AG04450 (cell line): ENCODE measurements at regions of chr7 and their contacts with region 1.

Region 1: DNA sequence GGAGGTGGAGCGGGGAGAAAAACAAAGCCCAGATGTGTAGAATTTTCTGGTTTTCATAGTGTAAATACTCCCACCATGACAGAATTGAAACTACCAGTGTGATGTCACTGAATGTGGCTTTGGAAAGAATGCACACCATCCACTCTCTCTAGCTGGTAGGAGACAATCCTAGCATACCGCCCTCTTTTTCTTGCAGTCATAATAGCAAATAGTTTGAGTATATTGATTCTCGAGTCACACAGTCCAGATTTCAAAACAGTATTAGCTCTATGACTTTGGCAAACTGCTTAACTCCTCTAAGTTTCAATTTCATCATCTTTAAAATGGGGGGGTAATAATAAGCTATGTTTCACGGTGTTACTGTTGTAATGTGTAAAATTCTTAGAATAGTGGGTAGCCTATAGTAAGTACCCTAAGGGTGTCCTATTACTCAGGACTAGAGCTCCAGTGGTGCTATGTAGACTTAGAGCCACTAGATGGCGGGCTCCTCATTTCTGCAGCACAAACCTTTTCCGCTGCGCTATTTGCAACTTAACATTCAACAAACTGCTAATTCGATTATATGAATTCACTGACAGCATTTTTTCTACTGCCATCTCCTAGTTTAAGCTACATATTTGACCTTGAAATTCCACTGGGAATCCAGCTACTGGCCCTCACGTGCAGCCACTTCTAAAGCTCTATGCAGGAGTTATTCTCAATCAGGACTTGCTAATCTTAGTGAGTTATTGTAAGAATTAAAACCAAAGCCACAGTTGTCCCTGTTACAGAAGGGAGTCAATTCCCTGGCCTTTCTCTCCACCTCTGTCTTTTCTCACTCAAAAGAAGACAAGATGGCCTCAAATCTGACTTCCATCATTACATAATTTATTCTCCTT is 18.7 kb downstream of the TAS2R40 start:
- DNase-seq: peak; percentile 68
- H3K4me3 ChIP-seq: no peak overlapping the region
- H3K27ac ChIP-seq: no peak overlapping the region
- H3K27me3 ChIP-seq: no peaks in the 10 kb centered on the region
- CTCF ChIP-seq: peak; percentile 97

Region 2: DNA sequence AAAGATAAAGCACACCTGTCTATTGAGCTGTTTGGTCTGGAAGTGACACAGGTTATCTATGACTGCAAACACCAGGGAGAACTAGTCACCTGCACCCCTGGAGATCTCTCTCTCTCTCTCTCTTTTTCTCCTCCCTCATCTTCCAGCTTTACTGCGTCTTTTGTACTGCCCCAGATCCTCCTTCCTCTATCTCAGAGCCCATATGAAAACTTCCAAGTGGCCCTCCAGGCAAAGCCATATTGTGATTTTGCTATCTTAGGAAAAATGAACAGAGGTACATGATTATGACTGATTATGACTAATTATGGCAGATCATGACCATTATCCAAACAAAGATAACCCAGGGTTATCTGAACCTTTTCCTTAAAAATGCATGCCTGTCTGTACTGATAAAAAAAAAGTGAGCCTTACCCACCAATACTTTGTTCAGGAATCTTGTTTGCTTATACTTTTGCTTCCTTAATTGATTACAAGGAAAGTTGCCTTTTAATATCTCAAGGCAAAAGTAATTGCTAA is 398.2 kb before region 1 on chr7:
- CTCF ChIA-PET with region 1: no interaction called
- POLR2A ChIA-PET with region 1: no interaction called
- DNase-seq: no peak
- H3K4me3 ChIP-seq: no peak overlapping the region
- H3K27ac ChIP-seq: no peak overlapping the region
- H3K27me3 ChIP-seq: no peaks in the 10 kb centered on the region
- CTCF ChIP-seq: no peak

Region 3: GRCh38 chr7:143214789-143215679 is 25.5 kb before region 1 on chr7:
- CTCF ChIA-PET with region 1: interaction called, 61 read pairs
- POLR2A ChIA-PET with region 1: no interaction called
- DNase-seq: peak; percentile 71
- H3K4me3 ChIP-seq: no peak overlapping the region
- H3K27ac ChIP-seq: no peak overlapping the region
- H3K27me3 ChIP-seq: no peaks in the 10 kb centered on the region
- CTCF ChIP-seq: peak; percentile 100

Region 4: DNA sequence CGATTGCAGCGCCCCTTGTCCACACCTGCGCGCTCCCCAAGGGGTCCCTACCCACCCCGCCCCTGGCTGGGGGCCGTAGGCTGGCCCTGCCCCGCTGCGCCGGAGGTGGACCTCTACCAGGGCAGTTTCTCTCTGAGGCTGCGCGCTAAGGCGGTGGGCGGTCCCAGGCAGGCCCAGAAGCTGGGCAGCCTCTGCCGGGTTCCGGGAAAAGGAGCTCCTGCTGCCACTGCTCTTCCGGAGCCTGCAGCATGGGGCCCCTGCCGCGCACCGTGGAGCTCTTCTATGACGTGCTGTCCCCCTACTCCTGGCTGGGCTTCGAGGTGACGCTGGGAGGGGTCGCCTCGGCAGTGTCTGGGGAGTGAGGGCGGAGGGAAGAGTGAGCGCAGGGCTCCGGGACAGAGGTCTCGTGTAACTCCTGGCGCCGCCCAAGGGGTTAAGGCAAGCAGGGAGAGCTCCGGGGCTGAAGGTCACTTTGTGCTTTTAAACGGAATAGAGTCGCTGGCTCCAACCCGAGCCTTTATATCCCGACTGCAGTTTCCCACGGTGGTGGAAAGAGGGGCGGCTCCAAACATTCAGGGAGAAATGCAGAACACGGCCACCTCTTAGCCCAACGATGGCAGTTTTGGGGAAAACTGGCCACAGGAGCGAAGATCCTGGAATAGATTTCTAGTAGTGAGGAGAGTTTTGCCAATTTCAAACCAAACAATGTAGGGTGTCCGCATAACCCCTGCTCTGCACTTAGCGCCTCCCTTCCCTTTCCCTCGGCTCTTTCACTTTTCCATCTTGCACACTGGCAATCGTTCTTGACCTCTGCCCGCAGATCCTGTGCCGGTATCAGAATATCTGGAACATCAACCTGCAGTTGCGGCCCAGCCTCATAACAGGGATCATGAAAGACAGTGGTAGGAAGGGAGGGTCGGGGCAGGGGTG is 23.0 kb after region 1 on chr7 and contains the start of gene GSTK1:
- CTCF ChIA-PET with region 1: interaction called, 57 read pairs
- POLR2A ChIA-PET with region 1: no interaction called
- DNase-seq: peak; percentile 16
- H3K4me3 ChIP-seq: peak within 1 kb of the TSS; percentile 86
- H3K27ac ChIP-seq: peak within 1 kb of the TSS; percentile 31
- H3K27me3 ChIP-seq: no peaks in the 10 kb centered on the region
- CTCF ChIP-seq: no peak
- polyA plus RNA-seq, gene GSTK1: 100 and 116 TPM in 2 replicates

Region 5: DNA sequence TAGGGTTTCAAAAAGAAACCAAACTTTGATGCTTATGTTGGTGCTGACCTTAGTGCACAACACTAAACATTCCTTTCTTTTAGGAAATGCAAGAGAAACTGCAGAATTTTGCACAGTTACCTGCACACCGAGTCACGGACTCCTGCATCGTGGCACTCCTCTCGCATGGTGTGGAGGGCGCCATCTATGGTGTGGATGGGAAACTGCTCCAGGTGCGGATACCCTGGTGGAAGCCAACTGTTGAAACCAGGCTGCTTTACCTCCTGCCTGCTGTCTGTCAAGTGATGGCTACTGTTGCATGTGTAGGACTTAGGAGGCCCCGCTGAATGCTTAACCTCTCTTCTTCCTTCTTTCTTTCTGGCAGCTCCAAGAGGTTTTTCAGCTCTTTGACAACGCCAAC is 59.3 kb after region 1 on chr7:
- CTCF ChIA-PET with region 1: interaction called, 24 read pairs
- POLR2A ChIA-PET with region 1: interaction called, 6 read pairs
- DNase-seq: no peak
- H3K4me3 ChIP-seq: no peak overlapping the region
- H3K27ac ChIP-seq: no peak overlapping the region
- H3K27me3 ChIP-seq: no peaks in the 10 kb centered on the region
- CTCF ChIP-seq: peak; percentile 47

Region 6: GRCh38 chr7:143372070-143372469 is 131.5 kb after region 1 on chr7:
- CTCF ChIA-PET with region 1: interaction called, 43 read pairs
- POLR2A ChIA-PET with region 1: no interaction called
- DNase-seq: no peak
- H3K4me3 ChIP-seq: no peak overlapping the region
- H3K27ac ChIP-seq: no peak overlapping the region
- H3K27me3 ChIP-seq: no peaks in the 10 kb centered on the region
- CTCF ChIP-seq: no peak

Region 7: DNA sequence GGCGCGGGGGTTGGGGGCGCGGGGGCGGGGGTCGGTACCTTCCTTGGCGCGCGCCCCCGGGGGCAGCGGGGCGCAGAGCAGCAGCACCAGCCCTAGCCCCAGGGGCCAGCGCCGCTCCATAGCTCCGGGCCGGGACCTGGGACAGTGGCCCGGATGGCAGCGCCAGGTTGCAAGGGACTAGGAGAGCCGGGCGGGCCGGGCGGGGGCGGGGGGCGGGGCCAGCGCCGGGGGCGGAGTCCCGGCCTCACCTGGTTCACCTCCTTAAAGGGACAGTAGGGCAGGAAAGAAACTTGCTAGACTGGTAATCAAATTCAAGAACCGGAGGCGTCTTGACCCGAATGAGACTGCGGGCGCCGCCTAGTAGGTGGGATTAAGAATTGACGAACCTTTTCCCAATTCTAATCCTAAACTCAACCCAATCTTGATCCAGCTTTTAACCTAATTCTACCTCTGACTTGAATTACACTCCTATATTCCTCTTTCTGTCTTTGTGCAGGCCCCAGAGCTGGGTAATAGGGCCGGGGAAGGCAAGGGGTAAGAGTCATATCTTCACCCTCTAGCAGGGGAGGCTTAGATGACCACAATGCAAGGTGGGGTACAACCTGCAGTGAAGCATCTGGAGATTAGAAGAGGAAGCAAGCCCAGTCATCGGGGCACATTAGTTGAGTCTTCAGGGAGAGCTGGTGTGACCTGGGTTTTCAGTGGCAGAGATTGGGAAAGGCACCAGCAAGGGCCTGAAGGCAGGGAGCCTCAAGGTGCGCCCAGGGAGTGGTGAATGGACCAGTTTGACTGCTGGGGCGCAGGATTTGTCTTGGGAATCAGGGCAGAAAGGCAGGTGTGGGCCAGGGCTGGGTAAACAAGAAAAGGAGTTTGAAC is 168.4 kb after region 1 on chr7 and contains the start of gene EPHA1:
- CTCF ChIA-PET with region 1: interaction called, 23 read pairs
- POLR2A ChIA-PET with region 1: no interaction called
- DNase-seq: no peak
- H3K4me3 ChIP-seq: no peak within 1 kb of the TSS
- H3K27ac ChIP-seq: no peak within 1 kb of the TSS
- H3K27me3 ChIP-seq: peaks cover 13% of the 10 kb centered on the region
- CTCF ChIP-seq: peak; percentile 25
- polyA plus RNA-seq, gene EPHA1: 0.09 TPM in 1 of 2 replicates, not detected in the other

Region 8: GRCh38 chr7:143456992-143457793 is 216.7 kb after region 1 on chr7:
- CTCF ChIA-PET with region 1: interaction called, 15 read pairs
- POLR2A ChIA-PET with region 1: no interaction called
- DNase-seq: no peak
- H3K4me3 ChIP-seq: no peak overlapping the region
- H3K27ac ChIP-seq: peak overlapping the region; percentile 65
- H3K27me3 ChIP-seq: no peaks in the 10 kb centered on the region
- CTCF ChIP-seq: no peak